HCT116 (cell line): ENCODE measurements at regions of chr22 and their contacts with region 1.

Region 1: DNA sequence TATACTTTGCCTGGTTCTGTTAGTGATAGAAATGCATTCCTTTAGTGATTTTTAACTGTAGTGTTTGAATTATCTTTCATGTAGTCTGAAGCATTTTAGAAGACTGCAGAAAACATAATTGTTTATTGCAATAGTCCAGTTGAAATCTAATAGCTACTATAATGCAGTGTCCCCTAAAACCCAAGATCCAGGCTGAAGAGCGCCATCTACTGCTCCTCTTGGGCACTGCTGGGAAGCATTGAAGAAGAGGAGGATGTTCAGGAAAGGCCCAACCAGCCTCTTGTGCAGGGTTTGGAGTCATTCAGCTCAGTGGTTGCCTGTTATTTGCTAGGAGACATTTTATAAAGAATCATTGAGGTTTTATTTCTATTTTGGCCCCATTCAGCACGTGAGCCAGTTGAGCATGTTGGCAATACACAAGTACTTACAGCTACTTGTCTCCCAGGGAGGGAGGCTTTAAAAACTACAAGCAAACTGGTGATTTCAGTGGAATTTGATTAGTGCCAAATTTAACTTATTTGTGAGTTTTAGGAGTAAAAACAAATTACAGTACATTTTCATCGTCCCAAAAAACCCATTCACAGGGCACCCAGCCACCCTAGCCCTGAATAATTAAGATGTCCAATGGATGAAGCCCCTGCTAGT is 74.9 kb upstream of the HORMAD2 start:
- DNase-seq: peak; percentile 39
- ATAC-seq: peak; percentile 94
- H3K4me3 ChIP-seq: no peak overlapping the region
- H3K27ac ChIP-seq: no peak overlapping the region
- H3K4me1 ChIP-seq: no peaks in the 10 kb centered on the region
- H3K27me3 ChIP-seq: no peaks in the 10 kb centered on the region
- CTCF ChIP-seq: peak; percentile 85 to 99 (median 97)
- POLR2A ChIP-seq: no peak
- RAD21 ChIP-seq: peak; percentile 89

Region 2: DNA sequence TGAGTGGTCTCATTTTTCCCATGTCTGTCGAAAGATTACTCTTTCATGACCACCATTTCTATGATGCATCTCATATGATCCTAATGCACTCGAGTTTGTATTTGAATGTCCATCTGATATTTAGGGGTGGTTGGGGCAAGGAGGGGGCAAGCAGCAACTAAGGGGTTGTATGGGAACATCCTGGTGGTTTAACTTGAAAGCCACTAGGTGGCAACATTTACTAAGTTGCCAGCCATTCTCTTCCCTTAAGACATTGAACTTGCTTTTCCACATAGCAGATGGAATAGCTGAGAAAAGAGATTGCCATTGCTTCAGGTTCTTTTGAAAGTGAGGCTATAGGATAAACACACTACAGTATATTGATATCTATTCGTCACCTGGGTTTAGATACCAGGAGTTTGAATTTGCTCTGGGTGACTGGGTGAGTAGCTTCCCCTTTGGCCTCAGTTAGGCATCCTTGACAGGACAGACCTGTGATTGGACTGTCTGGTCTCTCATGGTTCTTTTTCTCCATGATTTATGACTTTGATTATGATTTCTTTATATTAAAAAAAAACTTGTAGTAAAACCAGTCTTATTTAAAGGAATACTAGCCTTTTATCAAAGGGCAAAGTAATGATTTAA is 369.5 kb before region 1 on chr22:
- CTCF ChIA-PET with region 1: interaction called, 18 read pairs
- POLR2A ChIA-PET with region 1: no interaction called
- RAD21 ChIA-PET with region 1: interaction called in 1 of 2 experiments, 3 read pairs
- intact Hi-C with region 1: loop called (anchors 1 kb)
- DNase-seq: peak; percentile 34
- ATAC-seq: peak; percentile 93
- H3K4me3 ChIP-seq: no peak overlapping the region
- H3K27ac ChIP-seq: no peak overlapping the region
- H3K4me1 ChIP-seq: peaks cover 0 to 3% of the 10 kb centered on the region in 2 experiments; a peak in 1 of 4 replicates
- H3K27me3 ChIP-seq: no peaks in the 10 kb centered on the region
- CTCF ChIP-seq: peak; percentile 73
- POLR2A ChIP-seq: no peak
- RAD21 ChIP-seq: peak; percentile 78

Region 3: DNA sequence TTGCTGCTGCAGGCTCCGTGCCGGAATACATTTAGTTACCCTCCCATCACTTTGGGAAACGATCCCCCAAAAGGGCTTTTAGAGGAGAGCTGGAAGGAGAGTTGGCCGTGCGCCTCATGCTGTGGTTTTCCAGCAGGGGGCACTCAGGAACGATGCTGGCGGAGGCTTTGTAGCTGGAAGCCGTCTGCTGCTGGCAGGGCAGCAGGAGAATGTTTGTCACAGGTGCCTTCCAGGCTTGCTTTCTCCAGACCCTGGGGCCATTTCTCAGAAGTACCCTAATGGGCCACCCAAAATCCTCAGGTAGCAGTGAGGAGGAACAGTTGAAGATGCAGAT is 315.5 kb before region 1 on chr22:
- CTCF ChIA-PET with region 1: interaction called, 25 read pairs
- POLR2A ChIA-PET with region 1: no interaction called
- RAD21 ChIA-PET with region 1: no interaction called
- intact Hi-C with region 1: loop called (anchors 1 kb)
- DNase-seq: no peak
- ATAC-seq: peak; percentile 74
- H3K4me3 ChIP-seq: no peak overlapping the region
- H3K27ac ChIP-seq: no peak overlapping the region
- H3K4me1 ChIP-seq: no peaks in the 10 kb centered on the region
- H3K27me3 ChIP-seq: no peaks in the 10 kb centered on the region
- CTCF ChIP-seq: peak; percentile 56 to 73 (median 71); a peak in 5 of 6 replicates
- POLR2A ChIP-seq: no peak
- RAD21 ChIP-seq: peak; percentile 64

Region 4: DNA sequence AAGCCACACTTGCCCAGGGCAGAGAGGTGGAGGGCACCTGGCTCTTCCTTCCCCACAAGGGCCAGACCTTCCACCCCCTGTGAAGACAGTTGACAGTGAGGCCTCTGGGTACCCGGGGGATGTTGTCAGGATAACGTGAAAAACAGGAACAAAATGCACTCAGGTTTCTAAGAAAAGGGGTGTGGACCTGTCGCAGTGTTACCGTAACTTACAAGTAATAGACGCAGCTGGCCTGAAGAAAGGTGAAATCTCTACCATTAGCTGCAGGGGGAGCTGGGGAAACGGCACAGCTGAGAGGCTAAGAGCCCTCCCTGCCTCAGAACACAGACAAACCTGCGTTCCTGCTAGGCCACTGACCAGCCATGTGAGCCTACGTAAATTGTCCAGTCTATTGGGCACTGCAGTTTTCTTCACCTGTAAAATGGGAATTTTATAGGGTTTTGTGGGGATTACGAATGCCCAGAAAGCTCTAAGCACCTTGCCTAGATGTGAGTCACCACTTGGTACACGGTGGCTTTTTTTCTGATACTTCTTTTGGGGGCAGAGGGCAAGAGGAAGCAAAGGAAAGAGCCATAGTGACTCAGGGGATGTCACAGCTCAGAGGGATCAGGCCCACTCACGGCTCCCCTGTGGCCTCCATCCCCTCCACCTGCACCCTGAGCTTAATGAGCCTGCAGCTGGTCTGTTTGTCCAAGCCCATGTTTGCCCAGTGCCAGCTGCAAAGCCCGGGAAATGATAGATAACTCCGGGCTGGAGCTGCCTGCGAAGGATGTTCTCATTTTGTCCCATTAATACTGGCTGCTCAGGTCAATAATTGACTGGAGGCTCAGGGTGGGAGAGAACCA is 304.0 kb before region 1 on chr22:
- CTCF ChIA-PET with region 1: interaction called, 24 read pairs
- POLR2A ChIA-PET with region 1: interaction called, 5 read pairs
- RAD21 ChIA-PET with region 1: interaction called in 1 of 2 experiments, 4 read pairs
- intact Hi-C with region 1: loop called (anchors 1 kb)
- DNase-seq: peak; percentile 51
- ATAC-seq: peak; percentile 74
- H3K4me3 ChIP-seq: 0 out of 4 replicates have a peak overlapping the region, but pooled peaks of 1 of the 2 experiments have one; percentile 9
- H3K27ac ChIP-seq: peak overlapping the region; percentile 38
- H3K4me1 ChIP-seq: peaks cover 36 to 41% of the 10 kb centered on the region in 2 experiments
- H3K27me3 ChIP-seq: no peaks in the 10 kb centered on the region
- CTCF ChIP-seq: peak; percentile 39 to 59 (median 51); a peak in 5 of 6 replicates
- POLR2A ChIP-seq: no peak
- RAD21 ChIP-seq: peak; percentile 67

Region 5: DNA sequence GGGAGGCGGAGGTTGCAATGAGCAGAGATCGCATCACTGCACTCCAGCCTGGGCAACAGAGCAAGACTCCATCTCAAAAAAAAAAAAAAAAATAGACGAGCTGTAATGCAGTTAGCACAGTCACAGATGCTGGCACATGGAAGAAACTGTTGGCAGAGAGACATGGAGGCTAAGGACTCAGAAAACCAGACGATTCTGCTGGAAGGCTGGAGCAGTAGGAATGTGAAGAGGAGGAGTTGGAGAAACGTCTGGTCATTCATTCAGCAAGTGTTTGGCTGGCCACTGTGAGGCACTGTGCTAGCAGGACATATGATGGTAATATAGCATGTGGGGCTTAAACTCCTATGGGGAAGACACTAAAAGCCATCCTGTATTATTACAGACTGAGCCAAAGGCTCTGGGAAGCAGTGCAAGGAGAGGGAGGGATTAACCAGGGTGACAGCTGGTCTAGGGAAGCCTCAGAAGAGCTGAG is 233.1 kb before region 1 on chr22:
- CTCF ChIA-PET with region 1: interaction called, 20 read pairs
- POLR2A ChIA-PET with region 1: no interaction called
- RAD21 ChIA-PET with region 1: interaction called, 3 read pairs
- intact Hi-C with region 1: loop called (anchors 2 kb)
- DNase-seq: peak; percentile 24
- ATAC-seq: peak; percentile 70
- H3K4me3 ChIP-seq: no peak overlapping the region
- H3K27ac ChIP-seq: peak overlapping the region; percentile 73; the same call in 1 of the 2 replicates
- H3K4me1 ChIP-seq: peaks cover 14 to 44% of the 10 kb centered on the region in 2 experiments
- H3K27me3 ChIP-seq: no peaks in the 10 kb centered on the region
- CTCF ChIP-seq: peak in 2 of 3 experiments; percentile 70 to 72; a peak in 5 of 6 replicates
- POLR2A ChIP-seq: no peak
- RAD21 ChIP-seq: peak; percentile 60

Region 6: DNA sequence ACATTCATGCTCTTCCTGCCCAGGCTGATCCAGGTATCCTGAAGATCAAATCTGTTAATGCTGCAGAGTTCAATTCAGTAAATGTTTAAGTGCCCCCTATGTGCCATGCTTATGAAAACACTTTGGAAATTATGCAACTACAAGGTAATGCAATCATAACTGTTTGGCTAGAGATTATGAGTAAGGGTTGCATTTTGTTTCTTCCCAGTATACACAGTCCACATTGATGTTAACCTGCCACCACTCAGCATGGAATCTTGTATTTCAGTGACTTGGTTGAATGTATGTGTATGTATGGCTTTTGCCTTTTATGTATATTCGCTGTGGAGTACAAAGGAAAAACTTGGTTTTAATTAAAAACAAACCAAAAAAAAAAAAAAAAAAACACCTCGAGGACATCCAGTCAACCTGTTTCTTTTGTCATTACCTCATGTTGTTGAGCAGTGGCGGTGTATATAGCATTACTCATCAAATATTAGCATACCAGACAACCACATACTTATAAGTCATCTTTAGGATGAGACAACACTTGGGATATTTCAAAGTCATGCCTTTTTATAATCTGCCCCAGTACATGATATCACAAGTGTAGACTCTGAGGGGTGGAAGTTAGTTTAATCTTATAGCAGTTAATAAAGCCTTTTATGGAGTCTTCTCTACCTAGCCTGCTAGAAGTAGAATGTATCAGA is 11.2 kb before region 1 on chr22:
- CTCF ChIA-PET with region 1: interaction called, 25 read pairs
- POLR2A ChIA-PET with region 1: no interaction called
- RAD21 ChIA-PET with region 1: no interaction called
- intact Hi-C with region 1: no loop called
- DNase-seq: no peak
- ATAC-seq: peak; percentile 62; the same call in 1 of the 2 replicates
- H3K4me3 ChIP-seq: no peak overlapping the region
- H3K27ac ChIP-seq: no peak overlapping the region
- H3K4me1 ChIP-seq: peaks cover 2 to 24% of the 10 kb centered on the region in 2 experiments
- H3K27me3 ChIP-seq: no peaks in the 10 kb centered on the region
- CTCF ChIP-seq: peak; percentile 16 to 34 (median 27); a peak in 3 of 6 replicates
- POLR2A ChIP-seq: no peak
- RAD21 ChIP-seq: peak; percentile 64